Endothelial cell of umbilical vein (primary cell): ENCODE measurements at regions of chr12 and their contacts with region 1.

Region 1: GRCh38 chr12:31238764-31239387 is 87.1 kb downstream of the SINHCAF start:
- DNase-seq: peak; percentile 67
- H3K4me3 ChIP-seq: no peak overlapping the region
- H3K27ac ChIP-seq: no peak overlapping the region
- H3K4me1 ChIP-seq: no peaks in the 10 kb centered on the region
- H3K27me3 ChIP-seq: peaks cover 11 to 16% of the 10 kb centered on the region in 2 experiments
- CTCF ChIP-seq: peak; percentile 68 to 75
- POLR2A ChIP-seq: no peak

Region 2: DNA sequence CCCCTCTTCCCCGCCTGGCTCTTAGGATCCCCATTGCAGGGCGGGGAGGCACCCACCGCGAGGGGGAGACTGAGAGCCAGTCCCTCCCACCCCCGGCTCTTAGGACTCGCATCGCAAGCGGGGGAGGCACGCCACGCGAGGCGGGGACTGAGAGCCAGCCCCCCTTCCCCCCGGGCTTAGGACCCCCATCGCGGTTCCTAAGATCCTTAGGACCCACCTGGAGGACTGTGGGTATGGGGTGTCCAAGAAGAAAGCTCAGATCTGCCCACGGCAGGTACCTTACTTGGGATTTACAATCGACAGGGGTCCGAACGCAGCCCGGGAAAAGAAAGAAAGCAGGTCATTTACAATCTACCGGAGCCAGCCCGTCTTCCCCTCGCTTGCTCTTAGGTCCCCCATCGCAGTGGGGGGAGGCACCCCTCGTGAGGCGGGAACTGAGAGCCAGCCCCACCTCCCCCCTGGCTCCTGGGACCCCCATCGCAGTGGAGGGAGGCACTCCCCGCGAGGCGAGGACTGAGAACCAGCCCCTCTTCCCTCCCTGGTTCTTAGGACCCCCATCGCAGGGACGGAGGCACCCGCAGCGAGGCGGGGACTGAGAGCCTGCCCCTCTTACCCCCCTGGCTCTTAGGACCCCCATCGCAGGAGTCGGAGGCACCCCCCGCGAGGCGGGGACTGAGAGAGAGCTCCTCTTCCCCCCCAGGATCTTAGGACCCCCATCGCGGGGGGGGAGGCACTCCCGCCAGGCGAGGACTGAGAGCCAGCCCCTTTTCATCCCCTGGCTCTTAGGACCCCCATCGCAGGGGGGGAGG is 121.5 kb before region 1 on chr12:
- CTCF ChIA-PET with region 1: interaction called, 3 read pairs
- POLR2A ChIA-PET with region 1: no interaction called
- dilution Hi-C with region 1: no loop called
- intact Hi-C with region 1: loop called (anchors 2 kb)
- DNase-seq: peak; percentile 49
- H3K4me3 ChIP-seq: peak overlapping the region; percentile 21 to 58 (median 46)
- H3K27ac ChIP-seq: no peak overlapping the region
- H3K4me1 ChIP-seq: peaks cover 4% of the 10 kb centered on the region
- H3K27me3 ChIP-seq: peaks cover 17 to 23% of the 10 kb centered on the region in 2 experiments
- CTCF ChIP-seq: peak; percentile 42 to 82
- POLR2A ChIP-seq: no peak